ENCODE measurements at regions of chr20 and their contacts with region 1.

Region 1: DNA sequence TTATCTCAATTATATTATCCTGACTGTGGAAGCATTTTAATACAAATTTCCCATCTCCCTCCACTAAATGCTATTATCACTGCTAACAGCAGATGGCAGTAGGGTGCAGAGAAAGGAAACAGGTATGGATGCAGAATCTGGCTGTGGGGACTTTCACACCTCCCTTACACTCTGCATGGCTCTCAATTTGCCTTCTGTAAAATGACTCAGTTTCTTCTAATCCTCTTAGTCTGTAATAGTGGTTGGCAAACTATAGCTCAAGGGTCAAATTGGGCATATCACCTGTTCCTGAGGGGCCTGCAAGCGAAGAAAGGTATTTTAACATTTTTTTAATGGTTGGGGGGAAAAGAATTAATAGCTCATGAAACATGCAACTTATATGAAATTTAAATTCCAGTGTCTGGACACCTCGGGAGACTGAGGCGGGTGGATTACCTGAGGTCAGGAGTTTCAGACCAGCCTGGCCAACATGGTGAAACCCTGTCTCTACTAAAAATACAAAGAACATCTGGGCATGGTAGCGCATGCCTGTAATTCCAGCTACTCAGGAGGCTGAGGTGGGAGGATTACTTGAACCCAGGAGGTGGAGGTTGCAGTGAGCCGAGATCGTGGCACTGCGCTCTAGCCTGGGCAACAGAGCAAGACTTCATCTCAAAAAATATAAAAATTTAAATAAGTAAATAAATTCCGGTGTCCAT is 83.5 kb downstream of the ZMYND8 start:
- DNase-seq: peak in 1 of 2 donors; percentile 77
- ATAC-seq: peak; percentile 39 to 84 (median 69)
- H3K4me3 ChIP-seq: no peak overlapping the region
- H3K27ac ChIP-seq: peak overlapping the region in 9 of 10 donors; percentile 42 to 89 (median 67)
- H3K4me1 ChIP-seq: peaks cover 10 to 53% (median 51%) of the 10 kb centered on the region in 9 donors
- H3K27me3 ChIP-seq: no peaks in the 10 kb centered on the region
- CTCF ChIP-seq: peak; percentile 76 to 92 (median 88)

Region 2: GRCh38 chr20:47181056-47181862 is 91.8 kb before region 1 on chr20:
- intact Hi-C with region 1: no loop called
- DNase-seq: no peak
- ATAC-seq: peak in 1 of 8 donors; percentile 60
- H3K4me3 ChIP-seq: no peak overlapping the region
- H3K27ac ChIP-seq: no peak overlapping the region
- H3K4me1 ChIP-seq: peaks cover 0 to under 1% (median 0%) of the 10 kb centered on the region in 9 donors
- H3K27me3 ChIP-seq: no peaks in the 10 kb centered on the region
- CTCF ChIP-seq: no peak

Region 3: DNA sequence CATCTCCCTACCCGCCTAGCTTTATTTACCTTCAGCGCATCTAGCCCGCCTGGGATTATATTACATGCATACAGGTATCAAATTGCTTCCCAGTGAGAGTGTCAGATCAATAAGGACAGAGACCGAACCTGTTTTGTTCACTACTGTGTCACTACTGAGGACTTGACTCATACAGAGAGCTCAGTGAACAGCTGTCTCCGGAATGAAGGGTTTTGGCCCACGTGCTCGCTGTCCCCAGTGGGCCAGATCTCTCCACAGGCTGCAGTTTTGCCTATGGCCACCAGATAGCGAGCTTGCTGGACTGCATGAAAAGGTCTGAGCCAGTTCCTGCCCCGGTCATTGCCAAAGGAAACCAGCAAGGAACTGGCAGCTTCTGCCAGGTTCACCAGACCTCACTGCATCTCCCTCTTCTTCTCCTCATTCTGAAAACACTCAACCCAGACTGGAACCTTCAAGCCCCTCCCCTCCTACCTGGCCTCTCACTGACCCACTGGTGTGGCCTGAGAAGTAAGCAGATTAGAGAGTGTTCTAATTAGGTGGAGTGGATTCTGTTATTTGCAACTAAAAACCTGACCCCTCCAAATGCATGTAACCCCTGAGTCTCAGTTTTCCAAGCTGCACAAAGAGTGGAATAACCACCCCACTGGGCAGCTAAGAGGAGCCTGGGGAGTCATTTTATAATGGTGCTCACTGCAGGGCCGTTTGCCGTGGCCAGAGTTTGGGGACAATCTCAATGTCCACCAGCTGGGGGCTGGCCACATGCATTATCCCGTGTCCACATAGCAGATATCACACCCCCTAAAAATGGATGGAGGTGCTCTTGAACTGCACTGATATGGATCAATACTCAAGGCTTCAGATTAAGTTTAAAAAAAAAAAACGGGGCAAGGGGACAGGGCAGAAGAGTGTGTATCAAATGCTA is 67.2 kb before region 1 on chr20:
- intact Hi-C with region 1: loop called in 1 of 10 experiments (anchors 5 kb)
- DNase-seq: peak; percentile 38 to 76
- ATAC-seq: peak; percentile 61 to 86 (median 70)
- H3K4me3 ChIP-seq: no peak overlapping the region
- H3K27ac ChIP-seq: no peak overlapping the region
- H3K4me1 ChIP-seq: peaks cover 0 to 16% (median 0%) of the 10 kb centered on the region in 9 donors
- H3K27me3 ChIP-seq: no peaks in the 10 kb centered on the region
- CTCF ChIP-seq: peak; percentile 31 to 83 (median 67)

Region 4: GRCh38 chr20:47231382-47232039 is 41.5 kb before region 1 on chr20:
- intact Hi-C with region 1: no loop called
- DNase-seq: no peak
- ATAC-seq: no peak
- H3K4me3 ChIP-seq: no peak overlapping the region
- H3K27ac ChIP-seq: peak overlapping the region in 1 of 10 donors; percentile 4
- H3K4me1 ChIP-seq: peaks cover 6 to 39% (median 17%) of the 10 kb centered on the region in 9 donors
- H3K27me3 ChIP-seq: no peaks in the 10 kb centered on the region
- CTCF ChIP-seq: no peak

Region 5: DNA sequence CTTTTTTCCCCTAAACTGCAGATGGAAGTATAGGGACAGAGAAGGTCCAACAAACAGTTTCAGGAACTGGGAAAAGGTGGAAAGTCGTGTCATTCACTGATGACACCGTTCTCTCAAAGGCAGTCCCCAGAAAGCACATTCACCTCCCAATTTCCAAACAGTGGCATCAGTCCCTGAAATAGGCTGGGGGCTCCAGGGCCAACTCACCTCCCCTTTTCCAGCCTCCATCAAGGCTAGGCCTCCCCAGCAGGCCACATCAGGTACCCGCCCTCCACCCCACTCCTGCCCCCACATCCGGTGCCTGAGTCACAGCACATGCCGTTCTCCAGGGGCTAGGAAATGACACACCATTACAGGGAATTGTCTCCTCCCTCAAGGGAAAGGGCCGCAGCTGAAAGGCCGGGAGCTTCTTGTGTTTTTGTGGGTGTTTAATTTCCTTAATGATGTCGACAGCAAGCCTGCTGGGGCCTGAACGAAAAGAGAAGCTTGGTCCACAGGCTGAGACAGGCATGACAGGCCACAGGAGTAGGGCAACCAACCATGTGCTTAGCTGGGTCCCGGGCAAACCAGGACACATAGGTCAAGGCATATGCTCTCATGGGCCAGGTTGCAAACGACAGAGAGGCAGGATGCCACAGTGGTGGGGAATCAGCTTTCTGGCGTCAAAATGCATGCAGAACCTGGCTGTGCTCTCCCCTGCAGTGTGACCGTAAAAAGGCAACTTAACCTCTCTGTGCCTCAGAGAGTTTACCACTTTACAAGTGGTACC is 44.3 kb after region 1 on chr20:
- intact Hi-C with region 1: loop called in 3 of 10 experiments (anchors 5 kb)
- DNase-seq: peak; percentile 73 to 89
- ATAC-seq: peak; percentile 56 to 86 (median 80)
- H3K4me3 ChIP-seq: peak overlapping the region in 1 of 10 donors; percentile 30
- H3K27ac ChIP-seq: peak overlapping the region; percentile 94 to 99 (median 98)
- H3K4me1 ChIP-seq: peaks cover 34 to 88% (median 75%) of the 10 kb centered on the region in 9 donors
- H3K27me3 ChIP-seq: no peaks in the 10 kb centered on the region
- CTCF ChIP-seq: no peak

Region 6: GRCh38 chr20:47379433-47380150 is 106.5 kb after region 1 on chr20:
- intact Hi-C with region 1: loop called (anchors 1 to 5 kb)
- DNase-seq: no peak
- ATAC-seq: no peak
- H3K4me3 ChIP-seq: no peak overlapping the region
- H3K27ac ChIP-seq: no peak overlapping the region
- H3K4me1 ChIP-seq: peaks cover 0 to 17% (median 9%) of the 10 kb centered on the region in 9 donors
- H3K27me3 ChIP-seq: no peaks in the 10 kb centered on the region
- CTCF ChIP-seq: no peak

Region 7: GRCh38 chr20:47620808-47621805 is 348.1 kb after region 1 on chr20:
- intact Hi-C with region 1: loop called (anchors 2 to 10 kb)
- DNase-seq: peak in 1 of 2 donors; percentile 23
- ATAC-seq: peak in 4 of 8 donors; percentile 49 to 64 (median 54)
- H3K4me3 ChIP-seq: no peak overlapping the region
- H3K27ac ChIP-seq: peak overlapping the region in 4 of 10 donors; percentile 4 to 35 (median 26)
- H3K4me1 ChIP-seq: peaks cover 0 to 33% (median 13%) of the 10 kb centered on the region in 9 donors
- H3K27me3 ChIP-seq: no peaks in the 10 kb centered on the region
- CTCF ChIP-seq: peak; percentile 80 to 96 (median 90)